ENCODE measurements at regions of chr7 and their contacts with region 1.

Region 1: GRCh38 chr7:137970253-137970975 is 31.5 kb downstream of the CREB3L2 start:
- DNase-seq: no peak
- H3K4me3 ChIP-seq: no peak overlapping the region
- H3K4me3 Mint-ChIP-seq: no peak overlapping the region
- H3K27ac Mint-ChIP-seq: no peak overlapping the region
- H3K4me1 ChIP-seq: peaks cover 58% of the 10 kb centered on the region
- H3K4me1 Mint-ChIP-seq: peaks cover 42% of the 10 kb centered on the region
- H3K27me3 ChIP-seq: no peaks in the 10 kb centered on the region
- H3K27me3 Mint-ChIP-seq: no peaks in the 10 kb centered on the region
- CTCF ChIP-seq: no peak

Region 2: GRCh38 chr7:137981670-137982069 is 11.3 kb after region 1 on chr7:
- CTCF ChIA-PET with region 1: interaction called, 3 read pairs
- POLR2A ChIA-PET with region 1: interaction called, 4 read pairs
- intact Hi-C with region 1: loop called (anchors 1 kb)
- DNase-seq: no peak
- H3K4me3 ChIP-seq: no peak overlapping the region
- H3K4me3 Mint-ChIP-seq: no peak overlapping the region
- H3K27ac Mint-ChIP-seq: peak overlapping the region; percentile 29
- H3K4me1 ChIP-seq: peaks cover 82% of the 10 kb centered on the region
- H3K4me1 Mint-ChIP-seq: peaks cover 66% of the 10 kb centered on the region
- H3K27me3 ChIP-seq: no peaks in the 10 kb centered on the region
- H3K27me3 Mint-ChIP-seq: no peaks in the 10 kb centered on the region
- CTCF ChIP-seq: no peak